H1 (cell line): ENCODE measurements at regions of chr3 and their contacts with region 1.

Region 1: DNA sequence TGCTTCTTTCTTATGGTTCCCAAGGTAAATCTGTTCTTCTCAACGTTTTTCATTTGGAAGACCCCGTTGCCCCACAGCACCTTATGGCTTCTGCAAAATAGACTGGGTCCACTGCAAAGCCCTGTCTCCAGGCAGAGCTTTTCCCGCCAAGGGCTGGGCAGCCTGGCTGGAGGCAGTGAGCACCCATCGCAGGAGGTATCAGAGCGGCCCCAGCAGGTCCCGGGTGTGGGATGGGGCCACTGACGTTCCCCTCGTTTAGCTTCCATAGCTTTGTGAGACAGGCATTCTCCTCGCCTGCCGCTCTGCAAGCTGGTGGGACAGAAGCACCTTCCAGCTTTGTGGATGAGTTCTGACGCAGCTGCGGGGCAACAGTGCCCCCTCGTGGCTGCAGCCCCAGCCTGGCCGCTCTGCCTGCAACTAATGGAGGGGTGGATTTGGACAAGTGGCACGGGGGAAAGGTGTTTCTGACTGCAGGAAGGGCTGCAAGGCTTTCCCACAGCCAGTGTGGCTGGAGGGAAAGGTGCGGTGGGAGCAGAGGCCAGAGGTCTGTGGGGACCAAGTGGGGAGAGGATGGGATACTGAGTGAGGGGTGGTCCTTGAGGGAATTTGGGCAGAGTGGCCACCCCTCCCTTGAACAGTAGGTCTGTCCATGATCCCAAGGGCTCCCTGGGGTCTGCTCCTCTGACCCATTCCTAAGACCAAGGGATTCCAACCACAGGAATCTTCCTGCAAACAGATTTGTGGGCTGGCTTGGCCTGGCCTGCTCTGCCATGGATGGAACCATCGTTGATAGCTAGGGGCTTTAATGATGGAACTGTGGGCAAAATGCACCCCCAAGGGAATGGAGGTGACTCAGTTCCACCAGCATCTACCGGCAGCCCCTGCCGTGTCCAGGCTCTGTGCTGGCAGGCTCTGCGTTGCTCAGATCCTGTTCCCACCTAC is 99.4 kb downstream of the FBLN2 start:
- DNase-seq: peak; percentile 84 to 99
- H3K4me3 ChIP-seq: 0 out of 8 replicates have a peak overlapping the region, but pooled peaks of 1 of the 4 experiments have one; percentile 14
- H3K27ac ChIP-seq: peak overlapping the region; percentile 95
- H3K4me1 ChIP-seq: peaks cover 0 to 9% (median 4%) of the 10 kb centered on the region in 4 experiments; a peak in 4 of 7 replicates
- H3K27me3 ChIP-seq: peaks cover 0 to 6% (median 2%) of the 10 kb centered on the region in 4 experiments; a peak in 3 of 7 replicates
- CTCF ChIP-seq: peak in 2 of 3 experiments; percentile 97 to 100; a peak in 3 of 4 replicates
- EP300 ChIP-seq: peak in 1 of 2 experiments; percentile 99; a peak in 2 of 3 replicates
- POLR2A ChIP-seq: no peak
- RAD21 ChIP-seq: peak; percentile 99 to 100

Region 2: GRCh38 chr3:12901623-12902045 is 746.7 kb before region 1 on chr3:
- CTCF ChIA-PET with region 1: no interaction called
- POLR2A ChIA-PET with region 1: no interaction called
- DNase-seq: no peak
- H3K4me3 ChIP-seq: no peak overlapping the region
- H3K27ac ChIP-seq: no peak overlapping the region
- H3K4me1 ChIP-seq: no peaks in the 10 kb centered on the region; a peak in 1 of 7 replicates
- H3K27me3 ChIP-seq: no peaks in the 10 kb centered on the region
- CTCF ChIP-seq: peak in 2 of 3 experiments; percentile 43 to 56; a peak in 3 of 4 replicates
- EP300 ChIP-seq: no peak
- POLR2A ChIP-seq: no peak
- RAD21 ChIP-seq: peak; percentile 65 to 72

Region 3: GRCh38 chr3:13479581-13480339 is 168.6 kb before region 1 on chr3 and contains the start of gene HDAC11:
- CTCF ChIA-PET with region 1: interaction called, 80 read pairs
- POLR2A ChIA-PET with region 1: interaction called, 3 read pairs
- DNase-seq: peak; percentile 98 to 99
- H3K4me3 ChIP-seq: peak within 1 kb of the TSS; percentile 54 to 80 (median 72)
- H3K27ac ChIP-seq: peak within 1 kb of the TSS; percentile 58
- H3K4me1 ChIP-seq: peaks cover 3 to 20% (median 8%) of the 10 kb centered on the region in 4 experiments
- H3K27me3 ChIP-seq: peaks cover 0 to 10% (median 5%) of the 10 kb centered on the region in 4 experiments; a peak in 5 of 7 replicates
- CTCF ChIP-seq: peak in 1 of 3 experiments; percentile 17; a peak in 1 of 4 replicates
- EP300 ChIP-seq: no peak; a peak in 1 of 3 replicates
- POLR2A ChIP-seq: peak in 1 of 2 experiments; percentile 70; a peak in 2 of 3 replicates
- RAD21 ChIP-seq: no peak
- total RNA-seq, gene HDAC11: 7.4 and 7.5 TPM in 2 replicates

Region 4: GRCh38 chr3:13513051-13513908 is 135.1 kb before region 1 on chr3:
- CTCF ChIA-PET with region 1: interaction called, 31 read pairs
- POLR2A ChIA-PET with region 1: interaction called, 3 read pairs
- DNase-seq: no peak
- H3K4me3 ChIP-seq: no peak overlapping the region
- H3K27ac ChIP-seq: no peak overlapping the region
- H3K4me1 ChIP-seq: peaks cover 0 to 2% (median under 1%) of the 10 kb centered on the region in 4 experiments; a peak in 1 of 7 replicates
- H3K27me3 ChIP-seq: no peaks in the 10 kb centered on the region
- CTCF ChIP-seq: no peak
- EP300 ChIP-seq: no peak
- POLR2A ChIP-seq: no peak
- RAD21 ChIP-seq: no peak

Region 5: DNA sequence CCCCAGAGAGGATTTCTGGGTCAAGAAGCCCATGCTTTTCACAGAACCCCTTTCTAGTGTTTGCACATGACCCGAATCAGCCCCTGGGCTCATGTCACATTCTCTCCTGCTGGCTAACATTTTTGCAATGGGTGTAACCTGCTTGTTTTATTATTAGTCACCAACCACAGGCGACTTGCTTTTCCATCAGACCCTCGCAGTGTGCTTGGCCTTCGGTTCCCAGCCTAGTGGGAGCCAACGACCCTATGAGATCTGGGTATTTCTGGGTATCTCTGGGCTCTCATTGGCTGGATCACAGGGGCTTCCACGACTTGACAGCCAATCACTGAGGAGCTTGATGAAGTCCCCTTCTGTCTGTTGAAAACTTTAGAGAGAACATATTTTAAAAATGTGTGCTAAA is 110.4 kb before region 1 on chr3:
- CTCF ChIA-PET with region 1: interaction called, 27 read pairs
- POLR2A ChIA-PET with region 1: interaction called, 3 read pairs
- DNase-seq: no peak
- H3K4me3 ChIP-seq: no peak overlapping the region
- H3K27ac ChIP-seq: no peak overlapping the region
- H3K4me1 ChIP-seq: peaks cover 0 to 5% (median 1%) of the 10 kb centered on the region in 4 experiments; a peak in 2 of 7 replicates
- H3K27me3 ChIP-seq: no peaks in the 10 kb centered on the region
- CTCF ChIP-seq: no peak
- EP300 ChIP-seq: no peak
- POLR2A ChIP-seq: no peak
- RAD21 ChIP-seq: no peak

Region 6: DNA sequence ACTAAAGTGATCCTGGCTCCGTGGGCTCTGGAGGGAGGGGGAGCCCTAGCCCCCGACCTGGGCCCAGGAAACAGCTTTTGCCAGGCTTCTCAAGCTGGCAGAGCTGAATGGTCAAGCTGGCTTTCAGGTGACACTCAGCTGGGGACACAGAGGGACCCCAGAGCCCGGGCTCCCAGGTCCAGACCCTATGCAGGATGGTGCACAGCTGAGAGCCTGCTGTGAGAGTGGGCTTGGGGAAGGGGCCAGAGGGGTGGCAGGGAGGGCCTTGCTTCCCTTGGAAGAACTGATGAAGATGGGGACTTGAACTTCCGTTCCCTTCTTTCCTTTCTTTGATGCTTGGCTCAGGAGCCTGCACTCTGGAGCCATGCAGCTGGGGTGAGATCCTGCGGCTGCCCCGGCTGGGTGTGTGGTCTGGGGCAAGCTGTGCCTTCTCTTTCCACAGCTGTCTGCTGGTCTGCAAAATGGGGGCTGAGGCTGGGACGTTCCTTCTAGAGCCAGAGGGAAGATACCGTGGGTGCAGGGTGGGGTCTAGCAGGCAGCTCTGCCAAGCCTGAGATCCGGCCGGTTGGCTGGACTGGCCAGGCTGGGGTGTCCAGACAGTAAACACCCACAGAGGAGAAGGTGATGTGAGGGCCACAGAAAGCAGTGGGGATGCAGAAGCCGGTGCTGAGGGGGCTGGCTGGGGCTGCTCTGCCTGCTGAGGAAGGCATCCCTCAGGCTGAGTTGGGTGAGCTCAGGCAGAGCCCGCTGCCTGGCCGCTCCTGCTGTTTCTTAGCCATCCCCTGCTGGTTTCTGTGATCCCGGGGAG is 53.5 kb before region 1 on chr3:
- CTCF ChIA-PET with region 1: interaction called, 10 read pairs
- POLR2A ChIA-PET with region 1: no interaction called
- DNase-seq: no peak
- H3K4me3 ChIP-seq: no peak overlapping the region
- H3K27ac ChIP-seq: no peak overlapping the region
- H3K4me1 ChIP-seq: peaks cover 0 to 8% (median 4%) of the 10 kb centered on the region in 4 experiments; a peak in 3 of 7 replicates
- H3K27me3 ChIP-seq: no peaks in the 10 kb centered on the region; a peak in 1 of 7 replicates
- CTCF ChIP-seq: no peak
- EP300 ChIP-seq: no peak
- POLR2A ChIP-seq: no peak
- RAD21 ChIP-seq: no peak

Region 7: DNA sequence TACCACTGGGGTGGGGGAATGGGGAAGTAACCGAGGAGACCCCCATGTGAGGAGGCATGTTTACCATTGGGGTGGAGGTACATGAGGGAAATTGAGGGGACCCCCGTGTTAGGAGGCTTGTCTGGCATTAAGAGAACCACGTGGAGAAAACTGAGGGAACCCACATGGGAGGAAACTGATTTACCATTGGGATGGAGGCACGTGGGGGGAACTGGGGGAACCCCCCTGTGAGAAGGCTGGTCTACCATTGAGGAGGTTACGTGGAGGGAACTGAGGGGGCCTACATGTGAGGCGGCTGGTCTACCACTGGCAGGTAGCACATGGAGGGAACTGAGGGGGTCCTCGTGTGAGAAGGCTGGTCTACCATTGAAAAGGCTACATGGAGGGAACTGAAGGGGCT is 60.0 kb after region 1 on chr3:
- CTCF ChIA-PET with region 1: no interaction called
- POLR2A ChIA-PET with region 1: no interaction called
- DNase-seq: no peak
- H3K4me3 ChIP-seq: no peak overlapping the region
- H3K27ac ChIP-seq: no peak overlapping the region
- H3K4me1 ChIP-seq: no peaks in the 10 kb centered on the region
- H3K27me3 ChIP-seq: no peaks in the 10 kb centered on the region
- CTCF ChIP-seq: no peak
- EP300 ChIP-seq: no peak
- POLR2A ChIP-seq: no peak
- RAD21 ChIP-seq: no peak

Region 8: GRCh38 chr3:13718436-13718835 is 70.1 kb after region 1 on chr3:
- CTCF ChIA-PET with region 1: no interaction called
- POLR2A ChIA-PET with region 1: no interaction called
- DNase-seq: peak in 1 of 2 experiments; percentile 41
- H3K4me3 ChIP-seq: no peak overlapping the region
- H3K27ac ChIP-seq: no peak overlapping the region
- H3K4me1 ChIP-seq: 0 out of 7 replicates have a peak, but pooled peaks cover 0 to 1% (median 0%) of the 10 kb centered on the region in 4 experiments
- H3K27me3 ChIP-seq: no peaks in the 10 kb centered on the region
- CTCF ChIP-seq: no peak
- EP300 ChIP-seq: no peak
- POLR2A ChIP-seq: no peak
- RAD21 ChIP-seq: no peak

Region 9: DNA sequence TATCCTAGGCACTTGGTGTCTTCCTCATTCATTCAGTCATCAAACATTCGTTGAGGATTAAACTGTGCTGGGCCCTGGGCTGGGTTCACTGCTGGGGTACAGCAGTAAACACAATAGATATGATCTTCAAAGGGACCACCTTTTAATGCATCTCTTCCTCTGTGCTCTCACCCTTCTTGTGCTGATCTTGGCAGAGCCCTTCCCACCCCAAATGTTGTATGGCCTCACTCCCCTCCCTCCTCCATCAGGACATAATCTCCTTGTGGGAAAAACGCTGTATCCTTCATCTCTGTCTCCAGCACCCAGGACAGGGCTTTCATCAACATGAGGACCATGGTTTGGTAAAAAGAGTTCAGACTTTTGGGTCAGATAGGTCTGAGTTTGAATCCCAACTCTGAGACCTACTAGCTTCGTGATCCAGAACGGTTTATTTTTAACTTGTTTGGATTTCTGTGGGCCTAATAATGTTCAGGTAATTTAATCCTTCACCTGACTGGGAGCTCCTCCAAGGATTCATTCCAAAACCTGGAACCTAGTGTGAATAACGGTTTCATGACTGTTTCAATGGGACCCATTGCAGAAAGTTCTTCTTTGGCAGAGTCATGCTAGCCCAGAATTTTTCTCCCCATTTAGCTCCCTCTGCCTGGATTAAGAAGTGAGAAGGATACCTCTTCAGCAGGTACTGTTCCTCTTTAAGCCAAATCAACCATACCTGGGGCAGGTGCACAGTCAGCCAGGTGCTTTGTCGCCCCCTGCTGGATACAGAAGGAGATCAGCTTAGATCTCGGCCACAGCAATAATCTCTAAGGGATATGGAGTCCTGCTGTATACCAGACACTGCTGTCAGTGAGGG is 236.7 kb after region 1 on chr3:
- CTCF ChIA-PET with region 1: interaction called, 765 read pairs
- POLR2A ChIA-PET with region 1: no interaction called
- DNase-seq: peak in 1 of 2 experiments; percentile 82
- H3K4me3 ChIP-seq: no peak overlapping the region
- H3K27ac ChIP-seq: no peak overlapping the region
- H3K4me1 ChIP-seq: peaks cover 0 to 6% (median 0%) of the 10 kb centered on the region in 4 experiments; a peak in 3 of 7 replicates
- H3K27me3 ChIP-seq: peaks cover 15 to 38% (median 23%) of the 10 kb centered on the region in 4 experiments
- CTCF ChIP-seq: peak; percentile 81 to 93 (median 93)
- EP300 ChIP-seq: no peak
- POLR2A ChIP-seq: no peak
- RAD21 ChIP-seq: peak; percentile 93 to 96

Region 10: DNA sequence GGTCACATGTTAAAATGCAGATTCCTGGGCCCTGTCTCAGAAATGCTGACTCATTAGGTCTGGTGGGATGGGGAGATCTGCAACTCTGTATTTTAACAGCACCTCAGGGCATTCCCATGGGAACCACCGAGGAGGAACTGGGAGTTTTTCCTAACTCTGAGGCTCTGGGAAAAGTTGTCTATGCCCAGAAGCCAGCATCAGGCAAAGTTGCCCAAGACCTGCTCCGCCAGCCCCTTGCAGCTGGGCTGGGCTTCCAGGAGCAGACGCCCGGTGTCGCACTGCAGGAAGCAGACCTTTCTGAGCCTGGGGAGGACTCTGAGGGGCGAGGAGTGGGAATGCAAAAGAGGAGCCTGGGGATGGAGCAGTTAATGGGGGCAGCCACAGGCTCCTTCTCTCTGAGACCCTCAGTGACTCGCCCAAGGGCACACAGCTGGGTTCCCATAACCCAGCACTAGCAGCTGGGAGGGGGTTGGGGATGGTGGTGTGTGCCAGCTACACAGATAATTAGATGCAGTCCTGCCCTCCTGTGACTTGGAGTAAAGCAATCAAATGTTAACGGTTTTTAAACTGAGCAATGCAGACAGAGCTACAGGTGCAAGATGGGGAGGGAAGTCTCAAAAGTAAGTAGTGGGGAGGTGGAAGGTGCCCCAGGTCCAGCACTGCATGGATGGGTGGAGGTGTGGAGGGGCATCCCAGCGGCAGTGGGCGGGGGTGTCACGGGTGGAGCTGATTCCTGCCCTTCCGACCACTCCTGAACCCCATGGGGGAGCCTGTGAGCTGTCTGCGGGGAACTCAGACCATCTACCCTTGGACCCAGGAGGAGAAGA is 630.7 kb after region 1 on chr3:
- CTCF ChIA-PET with region 1: no interaction called
- POLR2A ChIA-PET with region 1: no interaction called
- DNase-seq: peak in 1 of 2 experiments; percentile 59
- H3K4me3 ChIP-seq: no peak overlapping the region
- H3K27ac ChIP-seq: no peak overlapping the region
- H3K4me1 ChIP-seq: peaks cover 5 to 20% (median 15%) of the 10 kb centered on the region in 4 experiments
- H3K27me3 ChIP-seq: no peaks in the 10 kb centered on the region; a peak in 2 of 7 replicates
- CTCF ChIP-seq: peak in 2 of 3 experiments; percentile 4; a peak in 2 of 4 replicates
- EP300 ChIP-seq: no peak
- POLR2A ChIP-seq: no peak
- RAD21 ChIP-seq: peak; percentile 33 to 49